GM12878 (cell line): ENCODE measurements at regions of chr16 and their contacts with region 1.

Region 1: DNA sequence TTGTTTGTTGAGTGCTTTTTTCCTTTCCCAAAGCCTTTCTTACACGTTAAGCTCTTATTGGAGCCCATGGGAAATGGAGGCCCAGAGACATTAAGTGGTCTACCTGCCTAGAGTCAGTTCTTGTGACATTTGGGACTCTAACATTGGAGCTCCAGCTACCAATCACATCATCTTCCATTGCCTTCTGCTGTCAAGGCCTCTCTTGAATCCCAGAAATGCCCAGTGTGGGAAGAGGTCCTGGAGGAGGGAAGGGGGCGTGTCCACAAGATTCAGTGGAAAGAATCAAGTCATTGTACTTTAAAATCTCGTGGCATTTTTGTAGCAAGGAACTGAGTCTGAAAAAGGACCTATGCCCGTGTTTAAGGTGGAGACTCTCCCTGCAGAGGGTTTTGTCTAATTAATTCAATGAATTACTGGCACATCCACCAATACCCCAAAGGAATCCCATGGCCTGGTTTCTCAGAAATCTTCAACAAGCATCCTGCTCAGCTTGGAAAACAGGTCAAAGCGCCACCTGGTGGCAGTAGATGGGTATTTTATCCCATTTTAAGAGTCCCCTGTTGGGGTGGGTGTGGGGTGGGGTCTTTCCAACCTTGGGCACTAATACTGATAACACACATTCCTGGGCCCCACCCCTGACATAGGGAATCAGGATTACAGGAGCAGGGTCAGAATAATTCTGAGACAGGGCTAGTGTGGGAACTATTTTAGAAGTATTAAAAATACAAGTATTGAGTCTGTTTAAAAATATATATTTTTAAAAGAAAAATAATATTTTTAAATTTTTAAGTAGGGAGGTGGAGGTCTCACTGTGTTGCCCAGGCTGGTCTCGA is 24.6 kb downstream of the GPT2 start:
- DNase-seq: no peak
- ATAC-seq: peak; percentile 70
- H3K4me3 ChIP-seq: no peak overlapping the region
- H3K27ac ChIP-seq: no peak overlapping the region
- H3K4me1 ChIP-seq: peaks cover 22% of the 10 kb centered on the region
- H3K27me3 ChIP-seq: no peaks in the 10 kb centered on the region
- CTCF ChIP-seq: peak; percentile 58 to 67 (median 64)
- EP300 ChIP-seq: no peak
- POLR2A ChIP-seq: no peak
- RAD21 ChIP-seq: peak; percentile 76

Region 2: GRCh38 chr16:46883690-46884512 is 24.9 kb before region 1 on chr16 and contains the start of gene GPT2:
- CTCF ChIA-PET with region 1: interaction called, 15 read pairs
- POLR2A ChIA-PET with region 1: interaction called, 3 read pairs
- RAD21 ChIA-PET with region 1: no interaction called
- SMC1A ChIA-PET with region 1: interaction called, 4 read pairs
- in situ Hi-C with region 1: no loop called
- intact Hi-C with region 1: no loop called
- DNase-seq: peak; percentile 69
- ATAC-seq: peak; percentile 99
- H3K4me3 ChIP-seq: peak within 1 kb of the TSS; percentile 93
- H3K27ac ChIP-seq: peak within 1 kb of the TSS; percentile 8; the same call in 1 of the 2 replicates
- H3K4me1 ChIP-seq: peaks cover 7% of the 10 kb centered on the region; the same call in 1 of the 2 replicates
- H3K27me3 ChIP-seq: 0 out of 4 replicates have a peak, but pooled peaks cover 0 to 2% of the 10 kb centered on the region in 2 experiments
- CTCF ChIP-seq: no peak
- EP300 ChIP-seq: no peak
- POLR2A ChIP-seq: peak; percentile 82
- RAD21 ChIP-seq: no peak
- polyA plus RNA-seq, gene GPT2: 0.45 to 0.80 TPM

Region 3: DNA sequence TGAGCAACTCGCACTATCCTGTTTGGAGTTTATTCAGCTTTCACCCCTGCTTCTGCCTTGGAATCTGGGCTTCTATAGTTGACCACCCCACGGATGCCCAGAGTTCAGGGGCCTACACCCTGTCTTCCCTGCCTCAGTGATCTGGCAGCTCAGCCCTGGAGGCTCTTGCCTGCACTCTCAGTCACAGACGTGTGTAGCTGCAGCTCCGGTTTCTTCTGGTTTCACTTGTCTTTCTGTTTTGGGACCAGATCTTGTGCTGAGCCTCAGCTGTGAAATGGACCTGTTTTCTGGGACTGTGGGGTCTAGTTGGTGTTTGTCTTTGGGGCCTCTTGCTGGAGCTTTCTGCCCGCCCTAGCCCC is 18.8 kb before region 1 on chr16:
- CTCF ChIA-PET with region 1: interaction called, 15 read pairs
- POLR2A ChIA-PET with region 1: interaction called, 3 read pairs
- RAD21 ChIA-PET with region 1: interaction called, 9 read pairs
- SMC1A ChIA-PET with region 1: interaction called, 4 read pairs
- in situ Hi-C with region 1: no loop called
- intact Hi-C with region 1: no loop called
- DNase-seq: no peak
- ATAC-seq: peak; percentile 85
- H3K4me3 ChIP-seq: no peak overlapping the region
- H3K27ac ChIP-seq: peak overlapping the region; percentile 6; the same call in 1 of the 2 replicates
- H3K4me1 ChIP-seq: peaks cover 12% of the 10 kb centered on the region
- H3K27me3 ChIP-seq: no peaks in the 10 kb centered on the region
- CTCF ChIP-seq: no peak
- EP300 ChIP-seq: no peak
- POLR2A ChIP-seq: no peak
- RAD21 ChIP-seq: no peak

Region 4: GRCh38 chr16:46918861-46919792 is 10.4 kb after region 1 on chr16:
- CTCF ChIA-PET with region 1: interaction called, 20 read pairs
- POLR2A ChIA-PET with region 1: no interaction called
- RAD21 ChIA-PET with region 1: interaction called, 3 read pairs
- SMC1A ChIA-PET with region 1: interaction called, 3 read pairs
- in situ Hi-C with region 1: no loop called
- intact Hi-C with region 1: no loop called
- DNase-seq: peak; percentile 54
- ATAC-seq: peak; percentile 84
- H3K4me3 ChIP-seq: peak overlapping the region; percentile 37; the same call in 1 of the 2 replicates
- H3K27ac ChIP-seq: 0 out of 2 replicates have a peak overlapping the region, but pooled peaks have one; percentile 39
- H3K4me1 ChIP-seq: peaks cover 19% of the 10 kb centered on the region
- H3K27me3 ChIP-seq: no peaks in the 10 kb centered on the region
- CTCF ChIP-seq: peak; percentile 37 to 67 (median 51); a peak in 5 of 6 replicates
- EP300 ChIP-seq: no peak
- POLR2A ChIP-seq: peak; percentile 51
- RAD21 ChIP-seq: peak; percentile 69

Region 5: GRCh38 chr16:46929378-46930332 is 20.9 kb after region 1 on chr16:
- CTCF ChIA-PET with region 1: interaction called, 33 read pairs
- POLR2A ChIA-PET with region 1: no interaction called
- RAD21 ChIA-PET with region 1: no interaction called
- SMC1A ChIA-PET with region 1: interaction called, 4 read pairs
- in situ Hi-C with region 1: no loop called
- intact Hi-C with region 1: no loop called
- DNase-seq: no peak
- ATAC-seq: peak; percentile 97
- H3K4me3 ChIP-seq: no peak overlapping the region
- H3K27ac ChIP-seq: no peak overlapping the region
- H3K4me1 ChIP-seq: no peaks in the 10 kb centered on the region
- H3K27me3 ChIP-seq: no peaks in the 10 kb centered on the region
- CTCF ChIP-seq: peak; percentile 88 to 91 (median 91)
- EP300 ChIP-seq: no peak
- POLR2A ChIP-seq: no peak
- RAD21 ChIP-seq: peak; percentile 81